Activated T-helper 1 cell treated with anti-CD3 and anti-CD28 coated beads, Interleukin-12 subunit alpha, Interleukin-12 subunit beta, Interleukin-2, Interleukin-4 antibody, amounts not matched to agents 30 ng/mL and 10 ng/mL and 1 ng/mL, durations not matched to agents 14 hours and 24 hours and 36 hours (primary cell): ENCODE measurements at regions of chr6 and their contacts with region 1.

Region 1: GRCh38 chr6:117346142-117346930 is 79.4 kb downstream of the ROS1 start:
- DNase-seq: no peak
- H3K4me3 Mint-ChIP-seq: no peak overlapping the region
- H3K27ac Mint-ChIP-seq: no peak overlapping the region
- H3K4me1 Mint-ChIP-seq: no peaks in the 10 kb centered on the region
- H3K27me3 Mint-ChIP-seq: peaks cover 15% of the 10 kb centered on the region

Region 2: GRCh38 chr6:117555882-117556498 is 209.7 kb after region 1 on chr6:
- intact Hi-C with region 1: loop called (anchors 1 kb)
- DNase-seq: peak; percentile 9
- H3K4me3 Mint-ChIP-seq: no peak overlapping the region
- H3K27ac Mint-ChIP-seq: no peak overlapping the region
- H3K4me1 Mint-ChIP-seq: peaks cover 1% of the 10 kb centered on the region
- H3K27me3 Mint-ChIP-seq: peaks cover 3% of the 10 kb centered on the region

Region 3: GRCh38 chr6:117829594-117830319 is 483.4 kb after region 1 on chr6:
- intact Hi-C with region 1: loop called (anchors 10 kb)
- DNase-seq: no peak
- H3K4me3 Mint-ChIP-seq: no peak overlapping the region
- H3K27ac Mint-ChIP-seq: no peak overlapping the region
- H3K4me1 Mint-ChIP-seq: no peaks in the 10 kb centered on the region
- H3K27me3 Mint-ChIP-seq: peaks cover 3% of the 10 kb centered on the region